ENCODE measurements at regions of chr7 and their contacts with region 1.

Region 1: DNA sequence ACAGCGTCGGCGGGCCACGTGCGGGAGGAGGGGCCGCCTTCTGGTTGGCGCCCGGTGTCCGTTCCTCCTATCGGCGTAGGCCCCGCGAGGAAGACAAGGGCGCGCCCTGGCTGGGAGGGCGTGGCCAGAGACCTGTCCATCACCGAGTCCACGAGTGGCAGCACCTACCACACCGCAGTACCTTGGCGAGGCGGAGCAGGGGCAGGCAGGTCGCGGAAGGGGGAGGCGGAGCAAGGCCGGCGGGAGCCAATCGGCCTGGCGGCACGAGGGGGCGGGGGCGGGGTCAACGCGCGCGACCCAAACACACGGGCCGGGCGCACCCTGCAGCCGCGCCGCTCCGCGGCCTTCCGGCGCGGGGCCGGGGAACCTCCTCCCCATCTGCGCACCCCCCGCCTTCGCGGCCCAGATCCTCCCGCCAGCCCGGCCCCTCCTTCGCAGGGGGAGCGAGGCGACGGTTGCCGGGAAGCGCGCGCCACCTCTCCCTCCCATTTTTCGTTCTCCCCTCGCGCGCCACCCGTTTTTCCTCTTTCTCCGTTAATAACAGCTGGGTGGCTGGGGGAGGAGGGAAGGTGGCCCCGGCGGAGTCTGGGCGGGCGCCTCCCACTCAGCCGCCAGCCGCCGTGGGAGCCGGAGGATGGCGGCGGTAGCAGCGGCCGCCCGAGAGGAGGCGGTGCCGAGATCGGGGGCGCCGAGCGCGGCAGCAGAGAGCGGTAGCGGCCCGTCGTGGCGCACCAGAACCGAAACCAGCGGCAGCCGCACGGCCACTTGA is at the start of gene ZNRF2:
- DNase-seq: peak; percentile 99
- ATAC-seq: peak; percentile 93
- H3K4me3 Mint-ChIP-seq: peak within 1 kb of the TSS; percentile 74
- H3K27ac Mint-ChIP-seq: peak within 1 kb of the TSS; percentile 82
- H3K4me1 Mint-ChIP-seq: peaks cover 40% of the 10 kb centered on the region
- H3K27me3 Mint-ChIP-seq: no peaks in the 10 kb centered on the region
- total RNA-seq, gene ZNRF2: 8.1 to 8.8 TPM

Region 2: GRCh38 chr7:30026229-30027064 is 258.0 kb before region 1 on chr7 and contains the start of gene FKBP14:
- CTCF ChIA-PET with region 1: no interaction called
- POLR2A ChIA-PET with region 1: no interaction called
- intact Hi-C with region 1: loop called (anchors 1 to 2 kb)
- DNase-seq: peak; percentile 95
- ATAC-seq: peak; percentile 91
- H3K4me3 Mint-ChIP-seq: no peak within 1 kb of the TSS
- H3K27ac Mint-ChIP-seq: peak within 1 kb of the TSS; percentile 90
- H3K4me1 Mint-ChIP-seq: peaks cover 34% of the 10 kb centered on the region
- H3K27me3 Mint-ChIP-seq: no peaks in the 10 kb centered on the region
- total RNA-seq, gene FKBP14: 7.2 to 8.3 TPM

Region 3: GRCh38 chr7:30164567-30164966 is 119.9 kb before region 1 on chr7:
- CTCF ChIA-PET with region 1: interaction called, 5 read pairs
- POLR2A ChIA-PET with region 1: no interaction called
- intact Hi-C with region 1: loop called (anchors 2 to 10 kb)
- DNase-seq: no peak
- ATAC-seq: peak; percentile 24
- H3K4me3 Mint-ChIP-seq: no peak overlapping the region
- H3K27ac Mint-ChIP-seq: peak overlapping the region; percentile 17
- H3K4me1 Mint-ChIP-seq: peaks cover 38% of the 10 kb centered on the region
- H3K27me3 Mint-ChIP-seq: no peaks in the 10 kb centered on the region

Region 4: DNA sequence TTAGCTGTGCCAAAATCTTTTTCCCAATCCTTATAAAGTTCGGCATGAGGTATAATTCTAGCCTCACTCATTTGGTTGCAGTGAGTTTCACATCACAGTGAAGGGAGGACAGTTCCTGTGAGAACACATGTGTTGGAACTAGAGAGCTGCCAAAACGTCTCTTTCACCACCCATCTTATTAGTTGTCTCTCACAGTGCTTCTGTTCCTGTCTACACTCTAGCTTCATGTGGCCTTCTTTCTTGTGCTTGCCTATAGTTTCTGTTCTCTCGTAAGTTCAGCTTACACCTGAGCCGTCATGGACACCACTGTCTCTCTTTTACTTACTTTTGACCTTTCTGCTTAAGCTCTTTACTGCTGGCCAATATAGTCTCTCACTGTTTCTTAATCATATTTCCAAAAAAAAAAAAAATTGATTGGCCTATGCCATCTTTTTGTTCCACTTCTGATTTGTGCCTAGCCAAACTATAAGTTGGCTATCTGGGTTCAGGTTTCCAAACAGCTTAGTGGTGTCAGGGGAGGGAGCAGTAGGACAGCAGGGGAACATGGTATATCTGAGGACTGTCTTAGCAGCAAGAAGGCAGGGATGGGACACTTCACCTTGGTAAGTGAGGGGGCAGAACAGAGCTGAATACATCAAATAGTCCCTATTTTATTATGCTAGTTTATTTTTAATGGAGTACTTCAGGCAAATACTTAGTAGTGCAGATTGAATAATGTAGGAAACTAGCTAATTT is 38.0 kb after region 1 on chr7:
- CTCF ChIA-PET with region 1: no interaction called
- POLR2A ChIA-PET with region 1: interaction called, 5 read pairs
- intact Hi-C with region 1: loop called (anchors 2 kb)
- DNase-seq: peak; percentile 16
- ATAC-seq: peak; percentile 68
- H3K4me3 Mint-ChIP-seq: peak overlapping the region; percentile 73
- H3K27ac Mint-ChIP-seq: peak overlapping the region; percentile 91
- H3K4me1 Mint-ChIP-seq: peaks cover 63% of the 10 kb centered on the region
- H3K27me3 Mint-ChIP-seq: no peaks in the 10 kb centered on the region

Region 5: GRCh38 chr7:30348083-30348560 is 63.6 kb after region 1 on chr7:
- CTCF ChIA-PET with region 1: no interaction called
- POLR2A ChIA-PET with region 1: interaction called, 4 read pairs
- intact Hi-C with region 1: loop called (anchors 1 kb)
- DNase-seq: peak; percentile 59
- ATAC-seq: peak; percentile 91
- H3K4me3 Mint-ChIP-seq: peak overlapping the region; percentile 69
- H3K27ac Mint-ChIP-seq: peak overlapping the region; percentile 88
- H3K4me1 Mint-ChIP-seq: peaks cover 54% of the 10 kb centered on the region
- H3K27me3 Mint-ChIP-seq: no peaks in the 10 kb centered on the region

Region 6: DNA sequence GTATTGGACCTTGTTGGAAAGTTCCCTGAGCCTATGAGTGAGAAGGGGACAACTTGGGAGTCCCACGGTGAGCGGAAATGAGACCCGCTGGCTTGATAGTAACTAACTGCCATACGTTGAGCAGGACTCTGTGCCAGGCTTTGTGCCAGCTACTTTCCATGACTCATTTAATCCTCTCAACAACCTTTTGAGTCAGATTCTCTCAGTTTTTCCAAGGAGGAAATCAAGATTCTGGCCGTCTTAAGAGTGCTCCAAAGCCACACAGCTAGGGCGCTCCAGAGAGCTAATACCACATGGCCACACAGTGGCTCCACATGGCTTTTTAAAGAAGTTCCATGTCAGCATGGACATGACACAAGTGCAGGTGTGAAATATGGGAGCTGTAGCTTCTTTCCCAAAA is 138.4 kb after region 1 on chr7:
- CTCF ChIA-PET with region 1: no interaction called
- POLR2A ChIA-PET with region 1: no interaction called
- intact Hi-C with region 1: no loop called
- DNase-seq: peak; percentile 33
- ATAC-seq: peak; percentile 51
- H3K4me3 Mint-ChIP-seq: no peak overlapping the region
- H3K27ac Mint-ChIP-seq: no peak overlapping the region
- H3K4me1 Mint-ChIP-seq: peaks cover 8% of the 10 kb centered on the region
- H3K27me3 Mint-ChIP-seq: no peaks in the 10 kb centered on the region

Region 7: GRCh38 chr7:30504347-30505173 is 220.1 kb after region 1 on chr7 and contains the start of gene GGCT:
- CTCF ChIA-PET with region 1: interaction called, 3 read pairs
- POLR2A ChIA-PET with region 1: no interaction called
- intact Hi-C with region 1: loop called (anchors 1 to 2 kb)
- DNase-seq: peak; percentile 98
- ATAC-seq: peak; percentile 99
- H3K4me3 Mint-ChIP-seq: peak within 1 kb of the TSS; percentile 84
- H3K27ac Mint-ChIP-seq: peak within 1 kb of the TSS; percentile 90
- H3K4me1 Mint-ChIP-seq: peaks cover 44% of the 10 kb centered on the region
- H3K27me3 Mint-ChIP-seq: no peaks in the 10 kb centered on the region
- total RNA-seq, gene GGCT: 48.8 to 76.8 TPM

Region 8: GRCh38 chr7:30771174-30771879 is 486.8 kb after region 1 on chr7 and contains the start of gene MINDY4:
- CTCF ChIA-PET with region 1: no interaction called
- POLR2A ChIA-PET with region 1: no interaction called
- intact Hi-C with region 1: loop called in 1 of 2 experiments (anchors 1 kb)
- DNase-seq: peak; percentile 86
- ATAC-seq: peak; percentile 96
- H3K4me3 Mint-ChIP-seq: peak within 1 kb of the TSS; percentile 75
- H3K27ac Mint-ChIP-seq: peak within 1 kb of the TSS; percentile 74
- H3K4me1 Mint-ChIP-seq: peaks cover 11% of the 10 kb centered on the region
- H3K27me3 Mint-ChIP-seq: no peaks in the 10 kb centered on the region
- total RNA-seq, gene MINDY4: 1.4 to 1.7 TPM